ENCODE measurements at regions of chr20 and their contacts with region 1.

Region 1: GRCh38 chr20:31608256-31608980 is 3.3 kb downstream of the ID1 start:
- DNase-seq: peak; percentile 91

Region 2: DNA sequence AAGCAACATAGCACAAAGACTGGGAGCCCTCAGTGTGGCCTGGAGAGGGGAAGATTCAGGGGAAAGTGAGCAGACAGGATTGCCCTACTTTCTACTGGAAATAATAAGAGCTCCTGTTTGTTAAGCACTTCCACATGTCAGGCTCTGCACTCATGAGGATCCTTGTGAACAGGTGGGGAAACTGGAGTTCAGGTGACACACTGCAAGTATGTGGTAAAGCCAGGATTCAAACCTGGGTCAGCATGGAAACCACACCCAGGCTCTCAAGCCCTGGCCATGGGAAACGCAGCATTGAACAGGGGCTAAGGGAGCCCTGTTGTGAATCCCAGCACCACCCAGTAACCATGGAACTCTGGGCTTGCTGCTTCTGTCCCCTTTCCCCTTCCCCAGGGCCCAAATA is 46.2 kb before region 1 on chr20:
- intact Hi-C with region 1: loop called (anchors 2 kb)
- DNase-seq: no peak

Region 3: DNA sequence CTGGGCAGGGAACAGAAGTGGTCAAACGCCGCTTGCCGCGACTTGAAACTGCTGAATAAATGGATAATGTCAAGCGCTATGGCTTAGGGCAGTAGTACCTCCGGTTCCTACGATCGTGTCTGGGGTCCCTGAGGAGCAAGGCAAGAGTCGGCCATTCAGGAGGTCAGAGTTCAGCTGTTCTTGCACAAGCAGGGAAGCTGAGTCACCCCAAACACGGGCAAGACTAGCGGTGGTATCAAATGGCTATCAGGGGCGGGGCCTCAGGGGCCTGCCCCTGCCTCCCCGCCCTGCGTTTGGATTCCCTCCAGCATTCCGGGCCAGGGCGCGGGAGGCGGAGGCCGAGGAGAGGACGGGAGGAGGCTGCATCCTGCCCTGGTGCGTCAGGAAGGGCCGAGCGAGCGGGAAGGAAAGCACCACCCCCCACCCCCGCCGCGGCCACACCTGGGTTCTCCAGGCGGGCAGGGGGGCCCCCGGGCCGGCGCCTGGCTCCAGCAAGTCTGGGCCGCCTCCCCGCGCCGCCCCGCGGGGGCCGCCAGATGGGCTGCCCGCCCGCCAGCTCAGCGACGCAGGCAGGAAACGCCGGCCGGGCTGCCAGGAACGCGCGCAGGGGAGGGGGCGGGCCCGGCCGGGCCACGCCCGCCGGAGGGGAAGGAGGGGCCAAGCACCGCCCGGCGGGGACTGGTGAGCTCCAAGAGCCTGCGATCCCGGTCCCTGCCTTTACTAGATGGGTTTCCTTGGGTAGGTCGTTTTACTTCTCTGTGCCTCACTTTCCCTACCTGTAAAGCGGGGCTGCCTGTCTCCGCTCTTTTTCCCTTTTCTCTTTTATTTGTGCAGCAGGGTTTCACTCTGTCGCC is 35.5 kb before region 1 on chr20:
- intact Hi-C with region 1: loop called (anchors 1 kb)
- DNase-seq: peak; percentile 97

Region 4: GRCh38 chr20:31595654-31596411 is 12.6 kb before region 1 on chr20:
- intact Hi-C with region 1: loop called (anchors 1 kb)
- DNase-seq: peak; percentile 92

Measured in cardiac septum (tissue), 1 donor.